ENCODE measurements at regions of chr2 and their contacts with region 1.

Region 1: GRCh38 chr2:136378712-136379595 is 261.0 kb upstream of the CXCR4 start:
- DNase-seq: peak; percentile 45
- ATAC-seq: peak; percentile 83
- H3K4me3 ChIP-seq: no peak overlapping the region
- H3K27ac ChIP-seq: no peak overlapping the region
- H3K4me1 ChIP-seq: no peaks in the 10 kb centered on the region
- H3K27me3 ChIP-seq: no peaks in the 10 kb centered on the region
- CTCF ChIP-seq: peak; percentile 80

Region 2: DNA sequence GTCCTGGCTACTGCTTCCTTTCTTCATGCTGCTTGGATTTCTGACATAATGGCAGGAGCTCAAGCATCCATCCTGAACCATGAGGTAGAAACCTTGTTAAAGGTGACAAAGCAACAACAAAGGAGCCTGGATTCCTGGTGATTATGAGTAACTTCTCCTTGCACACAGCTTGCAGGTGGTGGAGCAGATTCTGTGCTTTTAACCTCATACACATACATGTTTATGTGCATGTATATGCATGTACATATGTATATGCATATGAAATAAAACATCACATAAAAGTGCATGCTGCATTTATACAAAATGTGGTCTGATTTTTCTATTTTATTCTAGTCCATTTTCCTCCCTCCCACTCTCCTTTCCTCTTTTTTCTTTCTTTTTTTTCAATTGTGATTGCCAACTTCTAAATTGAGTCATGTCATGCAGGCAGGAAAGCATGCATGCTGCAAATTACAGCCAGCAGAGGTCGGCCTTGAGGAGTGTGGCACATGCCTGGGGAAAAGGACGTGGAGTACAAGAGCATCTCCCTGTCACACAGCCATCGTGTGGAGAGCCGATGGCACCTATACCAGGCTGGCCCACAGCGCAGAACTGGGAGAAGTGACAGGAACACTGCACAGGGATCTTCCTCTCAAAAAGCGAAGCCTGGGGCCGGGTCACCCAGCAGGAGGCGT is 559.9 kb before region 1 on chr2:
- CTCF ChIA-PET with region 1: no interaction called
- POLR2A ChIA-PET with region 1: no interaction called
- in situ Hi-C with region 1: no loop called
- intact Hi-C with region 1: loop called (anchors 10 kb)
- DNase-seq: no peak
- ATAC-seq: peak; percentile 81
- H3K4me3 ChIP-seq: no peak overlapping the region
- H3K27ac ChIP-seq: no peak overlapping the region
- H3K4me1 ChIP-seq: no peaks in the 10 kb centered on the region
- H3K27me3 ChIP-seq: 0 out of 2 replicates have a peak, but pooled peaks cover 2% of the 10 kb centered on the region
- CTCF ChIP-seq: peak; percentile 77

Region 3: GRCh38 chr2:135913727-135914365 is 465.1 kb before region 1 on chr2:
- CTCF ChIA-PET with region 1: interaction called, 6 read pairs
- POLR2A ChIA-PET with region 1: no interaction called
- in situ Hi-C with region 1: no loop called
- intact Hi-C with region 1: loop called (anchors 2 kb)
- DNase-seq: peak; percentile 12
- ATAC-seq: no peak
- H3K4me3 ChIP-seq: no peak overlapping the region
- H3K27ac ChIP-seq: no peak overlapping the region
- H3K4me1 ChIP-seq: no peaks in the 10 kb centered on the region
- H3K27me3 ChIP-seq: no peaks in the 10 kb centered on the region
- CTCF ChIP-seq: peak; percentile 79

Region 4: GRCh38 chr2:136129601-136130000 is 249.4 kb before region 1 on chr2:
- CTCF ChIA-PET with region 1: no interaction called
- POLR2A ChIA-PET with region 1: no interaction called
- in situ Hi-C with region 1: no loop called
- intact Hi-C with region 1: loop called (anchors 10 kb)
- DNase-seq: no peak
- ATAC-seq: no peak
- H3K4me3 ChIP-seq: no peak overlapping the region
- H3K27ac ChIP-seq: no peak overlapping the region
- H3K4me1 ChIP-seq: no peaks in the 10 kb centered on the region
- H3K27me3 ChIP-seq: peaks cover 10% of the 10 kb centered on the region; the same call in 1 of the 2 replicates
- CTCF ChIP-seq: no peak